Activated CD8-positive, alpha-beta T cell treated with anti-CD3 and anti-CD28 coated beads, Interleukin-2, amount 10 ng/mL, durations not matched to agents 7 days and 5 days (primary cell): ENCODE measurements at regions of chr11 and their contacts with region 1.

Region 1: DNA sequence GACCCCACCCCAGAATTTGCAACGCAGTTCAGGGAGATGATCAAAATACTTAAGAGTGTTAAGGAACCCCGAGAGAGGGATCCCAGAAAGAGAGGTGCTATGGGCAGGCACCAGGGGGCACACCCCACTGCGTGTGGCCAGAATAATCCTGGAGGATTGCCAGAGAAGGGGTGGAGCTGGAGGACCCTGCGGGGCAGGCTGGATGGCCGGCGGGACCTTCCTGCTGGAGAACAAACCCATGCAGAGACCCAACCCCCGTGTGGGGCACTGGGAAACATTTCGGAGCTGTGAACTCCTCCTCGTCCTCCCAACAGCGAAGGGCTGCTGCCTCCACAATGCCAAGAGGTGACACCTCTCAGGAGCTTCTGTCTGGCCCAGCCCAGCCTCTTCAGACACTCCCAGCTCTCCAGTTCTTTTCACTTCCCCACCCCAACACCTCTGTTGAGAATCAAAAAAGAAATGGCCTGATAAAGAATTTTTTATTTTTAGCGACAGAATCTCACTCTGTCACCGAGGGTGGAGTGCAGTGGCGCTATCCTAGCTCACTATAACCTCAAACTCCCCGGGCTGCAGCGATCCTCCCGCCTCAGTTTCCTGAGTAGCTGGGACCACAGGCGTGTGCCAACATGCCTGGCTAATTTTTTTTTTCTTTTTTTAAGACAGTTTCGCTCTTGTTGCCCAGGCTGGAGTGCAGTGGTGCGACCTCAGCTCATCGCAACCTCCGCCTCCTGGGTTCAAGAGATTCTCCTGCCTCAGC is 25.6 kb downstream of the RHOD start:
- DNase-seq: no peak
- ATAC-seq: peak; percentile 22
- H3K4me3 Mint-ChIP-seq: peak overlapping the region; percentile 15
- H3K27ac Mint-ChIP-seq: no peak overlapping the region
- H3K4me1 Mint-ChIP-seq: peaks cover 17% of the 10 kb centered on the region
- H3K27me3 Mint-ChIP-seq: peaks cover under 1% of the 10 kb centered on the region

Region 2: DNA sequence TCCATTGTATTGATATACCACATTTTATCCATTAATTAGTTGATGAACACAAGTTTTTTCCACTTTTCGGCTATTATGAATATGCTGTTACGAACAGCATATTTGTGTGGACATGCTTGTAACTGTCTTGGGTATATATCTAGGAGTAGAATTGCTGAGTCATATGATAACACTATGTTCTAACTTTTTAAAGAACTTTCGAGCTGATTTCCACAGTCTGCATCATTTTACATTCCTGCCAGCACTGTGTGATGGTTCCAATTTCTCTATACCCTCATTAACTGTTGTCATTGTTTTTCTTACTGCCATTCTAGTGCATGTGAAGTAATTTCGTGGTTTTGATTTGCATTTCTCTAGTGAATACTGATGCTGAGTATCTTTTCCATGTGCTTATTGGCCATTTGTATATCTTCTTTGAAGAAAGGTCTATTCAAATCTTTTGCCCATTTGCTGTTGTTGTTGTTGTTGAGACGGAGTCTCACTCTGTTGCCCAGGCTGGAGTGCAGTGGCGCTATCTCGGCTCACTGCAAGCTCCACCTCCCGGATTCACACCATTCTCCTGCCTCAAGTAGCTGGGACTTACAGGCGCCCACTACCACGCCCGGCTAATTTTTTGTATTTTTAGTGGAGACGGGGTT is 246.3 kb before region 1 on chr11:
- CTCF ChIA-PET with region 1: no interaction called
- POLR2A ChIA-PET with region 1: no interaction called
- DNase-seq: no peak
- ATAC-seq: no peak
- H3K4me3 Mint-ChIP-seq: no peak overlapping the region
- H3K27ac Mint-ChIP-seq: no peak overlapping the region
- H3K4me1 Mint-ChIP-seq: peaks cover 21% of the 10 kb centered on the region
- H3K27me3 Mint-ChIP-seq: no peaks in the 10 kb centered on the region

Region 3: GRCh38 chr11:66958232-66958955 is 123.8 kb before region 1 on chr11 and contains the start of gene PC:
- CTCF ChIA-PET with region 1: no interaction called
- POLR2A ChIA-PET with region 1: no interaction called
- DNase-seq: peak; percentile 99
- ATAC-seq: peak; percentile 98
- H3K4me3 Mint-ChIP-seq: peak within 1 kb of the TSS; percentile 82
- H3K27ac Mint-ChIP-seq: peak within 1 kb of the TSS; percentile 84
- H3K4me1 Mint-ChIP-seq: peaks cover 18% of the 10 kb centered on the region
- H3K27me3 Mint-ChIP-seq: peaks cover 8% of the 10 kb centered on the region
- total RNA-seq, gene PC: 10.4 to 11.7 TPM

Region 4: GRCh38 chr11:67071420-67072284 is 10.6 kb before region 1 on chr11:
- CTCF ChIA-PET with region 1: interaction called, 12 read pairs
- POLR2A ChIA-PET with region 1: interaction called, 3 read pairs
- DNase-seq: peak; percentile 82
- ATAC-seq: peak; percentile 92
- H3K4me3 Mint-ChIP-seq: no peak overlapping the region
- H3K27ac Mint-ChIP-seq: no peak overlapping the region
- H3K4me1 Mint-ChIP-seq: no peaks in the 10 kb centered on the region
- H3K27me3 Mint-ChIP-seq: peaks cover 5% of the 10 kb centered on the region

Region 5: GRCh38 chr11:67167086-67167485 is 84.9 kb after region 1 on chr11:
- CTCF ChIA-PET with region 1: interaction called, 31 read pairs
- POLR2A ChIA-PET with region 1: interaction called, 3 read pairs
- DNase-seq: no peak
- ATAC-seq: no peak
- H3K4me3 Mint-ChIP-seq: no peak overlapping the region
- H3K27ac Mint-ChIP-seq: no peak overlapping the region
- H3K4me1 Mint-ChIP-seq: peaks cover 2% of the 10 kb centered on the region
- H3K27me3 Mint-ChIP-seq: no peaks in the 10 kb centered on the region